ENCODE measurements at regions of chr17 and their contacts with region 1.

Region 1: DNA sequence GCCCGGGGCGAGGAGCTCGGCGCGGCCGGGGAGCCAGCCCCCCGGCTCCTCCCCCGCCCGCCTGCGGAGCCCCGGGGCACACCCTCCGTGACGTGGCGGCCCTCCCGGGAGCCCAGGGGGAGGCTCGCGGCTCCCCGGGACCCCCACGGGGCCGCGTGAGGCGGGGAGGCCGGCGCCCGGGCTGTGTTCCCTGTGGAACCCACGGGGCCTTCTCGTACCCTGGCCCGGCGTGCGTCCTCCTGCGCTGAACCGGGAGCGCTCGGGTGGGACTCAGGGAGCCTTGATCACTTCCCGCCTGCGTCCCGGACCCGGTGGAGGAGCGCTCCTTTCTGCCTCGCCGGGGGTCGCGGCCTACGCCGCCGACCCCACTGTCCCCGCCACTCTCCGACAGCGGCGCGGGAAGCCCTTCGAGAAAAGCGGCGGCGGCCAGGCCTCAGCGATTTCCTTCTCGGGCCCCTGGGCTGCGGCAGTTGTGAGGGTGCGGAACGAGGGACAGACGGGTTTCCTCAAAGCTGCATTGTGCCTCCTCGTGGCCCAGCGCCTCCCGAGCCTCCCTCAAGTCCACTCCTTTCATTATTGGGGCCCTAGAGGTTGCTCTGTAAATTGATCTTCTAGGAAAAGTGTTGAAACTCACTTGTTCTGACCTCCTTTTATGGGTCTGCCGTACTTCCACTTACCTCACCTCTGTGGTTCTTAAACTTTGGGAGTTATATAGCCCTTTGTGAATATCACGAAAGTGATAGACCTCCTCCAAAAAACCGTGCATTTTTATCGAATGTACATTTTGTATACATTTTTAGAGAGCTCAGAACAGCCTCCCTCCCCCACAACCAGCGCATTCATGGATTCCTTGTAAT is 597 bp downstream of the LIG3 start:
- DNase-seq: peak; percentile 80
- ATAC-seq: peak; percentile 94
- H3K4me3 ChIP-seq: peak overlapping the region; percentile 91
- H3K27ac ChIP-seq: peak overlapping the region; percentile 96
- H3K4me1 ChIP-seq: peaks cover 7% of the 10 kb centered on the region
- H3K27me3 ChIP-seq: no peaks in the 10 kb centered on the region
- CTCF ChIP-seq: peak; percentile 50
- POLR2A ChIP-seq: peak; percentile 77
- RAD21 ChIP-seq: peak; percentile 36

Region 2: DNA sequence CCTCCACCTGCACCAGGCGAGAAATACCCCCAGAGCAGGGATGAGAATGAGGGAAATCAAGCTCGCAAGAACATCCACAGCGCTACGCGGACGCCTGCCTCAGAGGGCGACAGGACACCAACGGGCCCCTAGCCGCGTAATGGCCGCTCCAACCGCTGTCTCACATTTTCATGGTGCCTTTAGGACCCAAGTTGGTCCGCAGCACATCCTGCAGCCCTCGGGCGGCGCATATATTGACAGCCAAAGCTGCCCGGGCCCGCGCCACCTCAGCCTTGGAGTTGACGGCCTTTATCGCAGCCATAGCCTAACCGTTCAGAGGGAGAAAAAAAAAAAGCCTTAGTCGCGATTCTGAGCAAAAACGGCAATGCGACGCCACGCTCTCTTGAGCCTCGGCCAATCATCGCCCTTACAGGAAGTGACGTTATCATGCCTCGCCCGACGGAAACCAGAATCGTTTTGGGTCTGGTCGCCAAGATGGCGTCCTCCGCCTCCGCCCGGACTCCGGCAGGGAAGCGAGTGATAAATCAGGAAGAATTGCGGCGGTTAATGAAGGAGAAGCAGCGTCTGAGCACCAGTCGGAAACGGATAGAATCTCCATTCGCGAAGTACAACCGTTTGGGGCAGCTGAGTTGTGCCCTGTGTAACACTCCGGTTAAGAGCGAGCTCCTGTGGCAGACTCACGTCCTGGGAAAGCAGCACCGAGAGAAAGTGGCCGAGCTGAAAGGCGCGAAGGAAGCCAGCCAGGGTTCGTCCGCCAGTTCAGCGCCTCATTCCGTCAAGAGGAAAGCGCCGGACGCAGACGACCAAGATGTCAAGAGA is 19.6 kb before region 1 on chr17 and contains the starts of genes CCT6B and ZNF830:
- CTCF ChIA-PET with region 1: interaction called, 3 read pairs
- POLR2A ChIA-PET with region 1: no interaction called
- dilution Hi-C with region 1: no loop called
- in situ Hi-C with region 1: no loop called
- intact Hi-C with region 1: loop called (anchors 1 kb)
- DNase-seq: peak; percentile 95
- ATAC-seq: peak; percentile 93
- H3K4me3 ChIP-seq: peak within 1 kb of the TSS; percentile 72
- H3K27ac ChIP-seq: peak within 1 kb of the TSS; percentile 93
- H3K4me1 ChIP-seq: peaks cover 2% of the 10 kb centered on the region; the same call in 1 of the 2 replicates
- H3K27me3 ChIP-seq: no peaks in the 10 kb centered on the region
- CTCF ChIP-seq: no peak
- POLR2A ChIP-seq: peak; percentile 91
- RAD21 ChIP-seq: no peak
- total RNA-seq, gene CCT6B: 0.72 and 1.7 TPM in 2 replicates
- total RNA-seq, gene ZNF830: 6.6 and 10.3 TPM in 2 replicates

Measured in IMR-90 (cell line).